ENCODE measurements at regions of chr10 and their contacts with region 1.

Region 1: DNA sequence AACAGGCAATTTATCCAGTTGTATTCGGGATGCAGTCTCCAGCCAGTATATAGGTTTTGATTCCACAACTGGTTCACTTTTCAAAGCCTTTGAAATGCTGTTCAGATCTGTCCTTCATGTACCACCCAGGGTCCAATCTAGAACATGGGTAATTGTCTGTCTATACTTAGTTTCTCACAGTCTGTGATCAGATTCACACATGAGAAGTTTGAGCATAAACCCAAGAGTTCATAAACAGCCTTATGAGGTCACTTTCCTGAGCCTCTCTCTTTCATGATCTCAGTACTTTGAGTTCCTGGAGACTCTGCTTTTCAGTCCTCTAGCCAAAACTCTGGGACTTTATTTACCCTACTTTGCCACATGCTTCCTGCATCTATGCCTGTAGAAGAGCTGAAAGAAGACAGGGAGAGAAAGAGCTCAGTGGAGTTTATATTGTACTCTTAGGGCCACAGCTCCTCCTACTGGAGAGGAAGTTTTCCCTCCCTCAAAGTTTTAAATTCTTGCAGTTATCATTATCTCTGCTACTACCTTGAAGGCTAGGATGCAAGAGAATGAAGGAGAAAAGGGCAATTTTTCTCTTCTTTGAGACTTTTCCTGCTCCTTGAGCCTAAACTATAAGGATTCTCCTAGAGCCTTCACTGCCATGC is 172.0 kb downstream of the ZEB1 start:
- DNase-seq: peak; percentile 32
- ATAC-seq: peak; percentile 60; the same call in 2 of the 3 replicates
- H3K4me3 ChIP-seq: no peak overlapping the region
- H3K27ac ChIP-seq: no peak overlapping the region
- H3K4me1 ChIP-seq: no peaks in the 10 kb centered on the region
- H3K27me3 ChIP-seq: no peaks in the 10 kb centered on the region
- CTCF ChIP-seq: peak; percentile 58
- EP300 ChIP-seq: no peak
- POLR2A ChIP-seq: no peak
- RAD21 ChIP-seq: no peak

Region 2: DNA sequence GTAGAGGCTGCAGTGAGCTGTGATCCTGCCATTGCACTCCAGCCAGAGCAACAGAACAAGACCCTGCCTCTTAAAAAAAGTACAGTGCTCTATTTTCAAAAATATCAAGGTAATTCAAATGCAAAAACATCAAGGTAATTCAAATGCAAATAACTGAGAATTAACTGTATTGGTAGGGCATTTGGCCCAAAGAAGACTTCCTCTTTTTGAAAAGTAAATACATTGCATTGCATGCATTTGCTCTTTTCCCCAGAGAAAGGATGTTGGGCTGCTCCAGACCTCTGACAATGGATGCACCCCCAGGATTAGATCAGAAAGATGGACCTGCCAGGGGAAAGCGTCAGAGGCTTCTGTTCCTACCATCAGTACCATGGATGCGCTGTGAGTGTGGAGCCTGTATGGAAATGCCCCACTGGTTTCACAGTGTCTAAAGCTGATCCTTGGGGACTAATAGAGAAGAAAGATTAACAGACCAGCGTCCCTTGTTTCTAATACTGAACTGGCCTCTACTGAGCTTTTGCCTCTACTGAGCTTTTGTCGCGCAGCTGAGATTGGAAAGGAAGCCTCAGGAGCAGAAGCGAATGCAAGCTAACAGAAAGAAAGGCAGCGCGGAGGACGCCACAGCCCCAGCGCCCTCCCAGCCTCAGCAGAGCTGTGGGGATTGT is 767.9 kb before region 1 on chr10:
- CTCF ChIA-PET with region 1: no interaction called
- POLR2A ChIA-PET with region 1: no interaction called
- in situ Hi-C with region 1: no loop called
- intact Hi-C with region 1: loop called (anchors 10 kb)
- DNase-seq: no peak
- ATAC-seq: no peak
- H3K4me3 ChIP-seq: no peak overlapping the region
- H3K27ac ChIP-seq: no peak overlapping the region
- H3K4me1 ChIP-seq: peaks cover 25% of the 10 kb centered on the region
- H3K27me3 ChIP-seq: peaks cover 5 to 23% of the 10 kb centered on the region in 2 experiments; a peak in 2 of 5 replicates
- CTCF ChIP-seq: no peak
- EP300 ChIP-seq: no peak
- POLR2A ChIP-seq: no peak
- RAD21 ChIP-seq: no peak